Ascending aorta (tissue), 2 donors: ENCODE measurements at regions of chr9 and their contacts with region 1.

Region 1: DNA sequence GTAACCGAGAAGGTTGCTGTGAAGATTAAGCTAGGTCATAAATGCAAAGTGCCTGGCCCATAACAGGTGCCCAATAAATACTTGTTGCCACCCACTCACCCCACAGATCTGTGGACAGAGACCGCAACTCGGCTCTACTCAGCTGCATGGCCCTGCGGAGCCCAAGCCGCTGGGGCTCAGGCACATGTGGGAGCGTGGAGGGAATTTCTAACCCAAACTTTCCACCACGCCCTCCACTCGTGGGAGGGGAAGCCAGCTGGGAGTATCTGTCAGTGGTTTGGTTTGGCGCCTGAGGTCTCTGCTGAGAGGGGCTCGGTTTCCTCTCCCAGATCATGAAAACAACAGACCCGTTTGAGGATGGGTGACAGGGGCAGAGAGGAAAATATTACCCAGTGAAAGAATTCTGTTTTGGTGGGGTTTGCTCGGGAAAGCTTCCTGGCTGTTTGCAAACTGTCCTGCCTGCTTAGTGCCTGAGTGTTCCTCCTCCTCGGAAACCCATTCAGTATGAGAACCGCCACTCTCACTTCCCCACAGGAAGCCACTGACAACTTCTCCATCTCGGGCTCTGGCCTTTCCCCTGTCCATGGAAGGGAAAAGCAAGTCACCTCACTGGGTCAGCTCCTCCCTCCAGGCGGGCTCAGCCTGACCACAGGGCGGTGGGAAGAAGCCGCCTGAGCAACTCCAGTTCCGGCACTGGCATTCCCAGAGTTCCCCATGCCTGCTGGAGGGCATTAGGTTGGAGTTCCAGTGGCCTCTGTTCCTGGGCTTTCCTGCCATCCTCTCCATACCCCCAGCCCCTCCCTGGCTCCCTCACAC is 60.1 kb downstream of the RGS3 start:
- DNase-seq: no peak
- H3K4me3 ChIP-seq: peak overlapping the region in 1 of 2 donors; percentile 5
- H3K27ac ChIP-seq: peak overlapping the region; percentile 75 to 93
- H3K4me1 ChIP-seq: peaks cover 62 to 79% of the 10 kb centered on the region in 2 donors
- H3K27me3 ChIP-seq: no peaks in the 10 kb centered on the region
- CTCF ChIP-seq: no peak

Region 2: DNA sequence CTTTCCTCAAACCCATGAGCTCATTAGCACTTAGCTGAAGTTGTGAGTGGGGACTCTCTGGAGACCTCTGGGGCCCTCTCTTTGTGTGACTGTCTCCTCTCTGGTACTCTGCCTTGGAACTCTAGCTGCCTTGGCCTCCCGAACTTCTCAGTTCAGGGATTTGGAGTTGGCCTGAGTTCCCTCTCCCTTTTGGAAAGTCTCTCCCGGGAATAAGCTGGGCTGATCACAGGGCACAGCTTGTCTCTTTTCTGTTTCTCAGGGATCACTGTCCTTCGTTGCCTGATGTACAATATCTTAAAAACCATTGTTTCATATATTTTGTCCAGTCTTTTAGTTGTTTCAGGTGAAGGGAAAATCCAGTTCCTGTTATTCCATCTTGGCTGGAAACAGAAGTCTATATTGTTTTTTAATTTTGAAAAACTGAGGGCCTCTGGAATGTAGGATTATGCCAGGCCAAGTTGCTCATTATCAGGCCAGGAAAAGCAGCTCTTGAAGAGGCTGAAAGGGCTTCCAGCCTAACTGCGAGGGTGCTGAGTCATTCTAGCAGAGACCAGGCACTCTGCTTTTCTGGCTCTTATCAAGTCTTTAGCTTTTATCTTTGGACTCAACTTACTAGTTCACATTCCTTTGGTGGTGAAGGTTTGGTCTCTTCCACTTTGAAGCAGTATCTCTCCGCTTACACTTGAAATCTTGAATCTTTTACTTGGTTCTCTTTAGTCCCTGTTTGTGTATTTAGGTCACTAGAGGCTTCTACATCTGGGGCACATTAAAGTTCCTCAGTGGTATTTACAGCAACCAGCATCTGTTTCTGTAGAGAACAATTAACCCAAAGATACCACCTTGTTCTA is 68.5 kb before region 1 on chr9:
- intact Hi-C with region 1: loop called (anchors 2 kb)
- DNase-seq: peak in 1 of 2 donors; percentile 86
- H3K4me3 ChIP-seq: peak overlapping the region in 1 of 2 donors; percentile 14
- H3K27ac ChIP-seq: peak overlapping the region; percentile 97
- H3K4me1 ChIP-seq: peaks cover 16 to 41% of the 10 kb centered on the region in 2 donors
- H3K27me3 ChIP-seq: no peaks in the 10 kb centered on the region
- CTCF ChIP-seq: no peak

Region 3: DNA sequence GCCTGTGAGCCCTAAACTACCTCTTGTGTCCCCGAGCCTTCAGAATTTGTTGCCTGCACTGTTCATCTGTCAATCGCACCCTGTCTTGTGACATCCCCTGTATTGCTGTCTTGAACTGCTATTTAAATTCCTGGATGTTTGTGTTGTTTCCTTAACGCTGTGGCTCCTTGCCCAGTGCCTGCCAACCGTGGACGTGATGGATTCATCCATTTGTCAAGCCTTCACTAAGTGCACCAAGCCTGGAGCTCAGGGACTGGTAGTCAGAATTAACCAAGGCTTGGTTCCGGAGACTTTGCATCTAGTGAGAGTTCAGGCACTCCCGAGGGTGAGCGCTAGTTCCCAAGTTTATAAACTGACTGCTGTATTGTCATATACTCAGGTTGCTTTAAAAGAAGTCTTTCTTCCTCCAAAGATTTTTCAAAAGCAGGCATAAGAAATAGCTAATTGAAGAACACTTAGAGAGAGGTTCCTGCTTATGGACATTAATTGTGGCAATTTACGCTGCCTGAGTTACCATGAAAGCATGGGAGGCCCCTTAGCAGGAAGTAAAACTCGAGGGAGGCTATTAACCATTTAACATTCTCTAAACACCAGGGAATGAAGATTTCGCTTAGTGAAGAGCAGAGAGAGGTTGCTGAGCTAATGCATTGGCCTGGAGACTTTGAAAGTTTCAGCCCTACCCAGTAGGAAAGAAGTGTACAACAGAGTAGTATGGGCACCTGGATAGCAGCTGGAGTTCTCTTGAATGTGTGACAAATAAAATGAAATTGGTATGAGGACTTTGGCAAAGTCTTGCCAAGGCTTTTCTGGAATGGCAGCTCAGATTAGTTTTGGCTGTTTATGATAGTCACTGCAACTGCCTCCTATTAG is 31.1 kb before region 1 on chr9:
- intact Hi-C with region 1: loop called (anchors 2 kb)
- DNase-seq: peak in 1 of 2 donors; percentile 81
- H3K4me3 ChIP-seq: no peak overlapping the region
- H3K27ac ChIP-seq: peak overlapping the region; percentile 78 to 92
- H3K4me1 ChIP-seq: peaks cover 11 to 48% of the 10 kb centered on the region in 2 donors
- H3K27me3 ChIP-seq: no peaks in the 10 kb centered on the region
- CTCF ChIP-seq: no peak

Region 4: DNA sequence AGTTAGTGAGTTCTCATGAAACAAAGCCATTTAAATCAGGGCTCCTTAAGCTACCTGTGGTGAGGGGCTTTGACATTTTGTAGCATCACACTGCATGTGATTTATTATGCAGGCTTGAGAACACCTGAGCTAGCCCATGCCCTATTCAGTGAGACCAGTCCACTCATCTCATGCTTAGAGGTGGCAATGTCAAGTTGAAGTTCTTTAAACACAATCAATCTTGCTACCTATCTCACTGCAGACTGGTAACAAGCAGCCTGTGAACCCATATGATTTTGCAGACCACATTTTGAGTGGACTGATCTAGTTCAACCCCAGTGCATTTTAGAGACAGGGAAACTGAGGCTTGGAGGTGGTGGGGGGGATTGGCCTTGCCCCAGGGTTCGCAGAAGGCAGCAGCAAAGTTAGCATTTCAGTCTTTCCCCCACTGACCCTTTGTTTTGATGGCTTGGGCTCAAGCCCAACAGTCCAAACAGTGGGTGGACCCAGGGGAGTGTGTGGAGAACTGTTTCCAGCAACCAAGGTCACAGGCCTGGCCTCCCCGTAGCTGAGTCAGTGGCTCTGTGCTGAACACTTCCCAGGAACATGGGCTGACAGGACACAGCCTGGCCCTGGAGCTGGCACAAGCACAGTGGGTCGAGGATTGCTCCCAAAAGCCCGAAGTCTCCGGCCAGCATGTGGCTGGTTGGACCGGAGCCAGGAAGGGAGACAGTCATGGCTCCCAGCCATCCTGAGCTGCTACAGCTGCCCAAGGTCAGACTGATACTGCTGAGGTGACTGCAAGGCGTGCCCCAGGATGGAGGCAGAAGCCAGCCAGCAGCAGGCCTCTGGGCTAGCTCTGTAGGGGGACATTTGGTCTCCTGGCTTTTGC is 35.2 kb after region 1 on chr9:
- intact Hi-C with region 1: loop called (anchors 5 kb)
- DNase-seq: peak; percentile 67 to 95
- H3K4me3 ChIP-seq: no peak overlapping the region
- H3K27ac ChIP-seq: peak overlapping the region; percentile 72 to 74
- H3K4me1 ChIP-seq: peaks cover 6 to 20% of the 10 kb centered on the region in 2 donors
- H3K27me3 ChIP-seq: no peaks in the 10 kb centered on the region
- CTCF ChIP-seq: no peak

Region 5: GRCh38 chr9:113581865-113582697 is 58.5 kb after region 1 on chr9:
- intact Hi-C with region 1: loop called (anchors 2 kb)
- DNase-seq: peak; percentile 59 to 88
- H3K4me3 ChIP-seq: peak overlapping the region; percentile 41 to 44
- H3K27ac ChIP-seq: peak overlapping the region; percentile 93 to 96
- H3K4me1 ChIP-seq: peaks cover 34 to 71% of the 10 kb centered on the region in 2 donors
- H3K27me3 ChIP-seq: no peaks in the 10 kb centered on the region
- CTCF ChIP-seq: peak in 2 of 3 experiments; percentile 29 to 60

Region 6: DNA sequence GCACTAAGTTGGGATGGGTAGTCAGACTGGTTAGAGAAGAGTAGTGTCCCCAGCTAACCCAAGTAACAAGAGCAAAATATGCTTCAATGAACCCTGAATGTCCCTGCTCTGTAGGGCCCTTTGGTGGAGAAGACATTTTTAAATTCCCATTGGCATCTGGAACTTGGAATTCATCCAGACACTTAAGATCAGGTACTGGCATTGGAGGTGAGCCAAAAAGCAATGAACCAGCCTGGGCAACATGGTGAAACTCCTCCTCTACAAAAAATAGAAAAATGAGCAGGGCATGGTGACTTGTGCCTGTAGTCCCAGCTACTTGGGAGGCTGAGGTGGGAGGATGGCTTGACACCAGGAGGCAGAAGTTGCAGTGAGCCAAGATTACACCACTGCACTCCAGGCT is 293.5 kb after region 1 on chr9:
- intact Hi-C with region 1: no loop called
- DNase-seq: no peak
- H3K4me3 ChIP-seq: no peak overlapping the region
- H3K27ac ChIP-seq: no peak overlapping the region
- H3K4me1 ChIP-seq: no peaks in the 10 kb centered on the region
- H3K27me3 ChIP-seq: no peaks in the 10 kb centered on the region
- CTCF ChIP-seq: no peak

Region 7: GRCh38 chr9:113844466-113844865 is 320.8 kb after region 1 on chr9:
- intact Hi-C with region 1: no loop called
- DNase-seq: no peak
- H3K4me3 ChIP-seq: no peak overlapping the region
- H3K27ac ChIP-seq: no peak overlapping the region
- H3K4me1 ChIP-seq: no peaks in the 10 kb centered on the region
- H3K27me3 ChIP-seq: no peaks in the 10 kb centered on the region
- CTCF ChIP-seq: no peak